GM18951 (cell line): ENCODE measurements at regions of chr10 and their contacts with region 1.

Region 1: GRCh38 chr10:132452631-132453469 is 55.9 kb downstream of the PWWP2B start:
- POLR2A ChIP-seq: peak; percentile 28

Region 2: DNA sequence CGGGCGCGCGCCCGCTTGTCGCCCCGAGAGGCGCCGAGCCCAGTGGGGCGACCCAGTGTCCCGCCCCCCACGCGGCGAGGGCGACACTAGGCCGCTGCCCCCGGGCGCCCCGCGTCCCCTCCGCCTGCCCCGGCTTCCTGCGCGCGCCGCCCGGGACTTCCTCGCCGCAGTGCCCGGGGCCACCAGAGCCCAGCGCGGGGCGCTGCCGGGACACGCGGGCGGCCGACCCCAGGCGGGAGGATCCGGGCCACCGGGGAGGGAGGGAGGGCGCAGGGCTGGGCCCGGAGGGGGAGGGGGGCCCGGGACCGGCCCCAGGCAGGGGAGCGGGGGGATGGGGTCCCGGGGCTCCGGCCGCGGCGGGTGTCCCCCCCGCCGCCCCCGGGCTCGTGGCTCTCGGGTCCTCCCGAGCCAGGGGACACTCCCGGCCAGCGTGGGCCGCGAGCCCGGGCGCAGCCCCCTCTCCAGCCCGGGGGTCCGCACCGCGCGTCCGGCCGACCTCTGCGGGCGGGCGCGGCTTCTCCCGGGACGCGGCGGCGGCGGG is 56.3 kb before region 1 on chr10:
- in situ Hi-C with region 1: loop called (anchors 10 kb)
- POLR2A ChIP-seq: no peak

Region 3: DNA sequence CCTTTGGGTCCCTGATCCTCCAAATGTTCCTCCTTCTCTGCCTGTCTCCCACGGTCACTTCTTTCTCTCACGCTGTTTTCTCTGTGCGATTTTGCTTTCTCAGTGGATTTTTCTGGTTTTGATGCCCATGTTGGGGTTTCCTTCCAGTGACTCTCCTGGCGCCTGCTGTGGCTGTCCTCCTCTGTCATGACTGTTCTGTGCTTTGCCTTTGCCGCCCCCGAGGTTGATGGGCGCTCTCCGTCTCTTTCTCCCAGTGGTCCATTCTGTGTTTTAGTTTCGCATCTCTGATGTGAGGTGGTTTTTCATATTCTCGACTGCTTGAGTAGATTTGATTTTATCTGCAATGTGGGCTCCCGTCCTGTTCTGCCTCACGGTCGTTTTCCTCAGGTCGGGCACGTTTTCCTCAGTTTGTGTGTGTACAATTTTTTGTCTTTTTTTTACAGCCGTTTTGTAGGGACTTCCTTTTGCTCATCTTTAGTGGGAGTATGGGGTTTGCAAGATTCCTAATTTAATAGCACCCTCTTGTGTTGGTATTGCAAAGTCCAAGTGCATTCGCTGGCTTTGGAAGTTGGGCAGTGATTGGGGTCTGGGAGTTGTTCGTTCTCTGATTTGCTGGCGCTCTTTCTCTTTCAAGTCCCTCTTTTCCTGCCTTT is 184.8 kb after region 1 on chr10:
- in situ Hi-C with region 1: loop called (anchors 10 kb)
- POLR2A ChIP-seq: no peak

Region 4: GRCh38 chr10:133159950-133160819 is 707.3 kb after region 1 on chr10 and contains the start of gene KNDC1:
- in situ Hi-C with region 1: no loop called
- POLR2A ChIP-seq: no peak